ENCODE measurements at regions of chr2 and their contacts with region 1.

Region 1: DNA sequence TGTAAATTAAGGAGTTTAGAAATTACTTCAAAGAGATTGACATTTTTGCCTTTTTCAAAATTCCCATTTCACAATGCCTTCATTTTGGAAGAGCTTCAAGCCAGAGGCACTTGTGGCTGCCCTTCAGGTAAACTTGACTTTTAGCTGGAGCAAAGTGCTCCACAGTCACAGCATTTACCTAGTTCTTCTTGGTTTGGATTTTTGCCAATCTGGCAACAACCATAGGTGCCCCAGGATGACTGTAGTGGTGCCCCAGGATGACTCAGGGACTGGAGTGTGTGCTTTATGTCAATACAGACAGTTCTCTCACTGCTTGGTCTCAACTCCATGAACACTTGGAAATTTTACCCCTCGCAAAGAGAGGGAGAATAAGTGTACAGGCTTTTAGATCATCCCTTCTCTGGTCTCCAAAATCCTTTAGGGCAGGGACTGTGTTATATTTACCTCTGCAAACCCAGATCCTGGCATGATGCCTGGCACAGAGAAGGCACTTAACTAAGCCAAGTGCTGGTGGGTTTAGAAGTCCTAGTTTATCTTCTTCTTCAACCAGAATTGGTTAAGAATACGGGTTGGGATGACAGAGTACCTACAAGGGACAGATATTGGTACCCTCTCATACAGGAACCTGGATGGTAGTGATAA is 15.3 kb upstream of the PTPN4 start:
- DNase-seq: peak; percentile 76
- H3K4me3 Mint-ChIP-seq: no peak overlapping the region
- H3K27ac Mint-ChIP-seq: no peak overlapping the region
- H3K4me1 Mint-ChIP-seq: peaks cover 27% of the 10 kb centered on the region
- H3K27me3 Mint-ChIP-seq: peaks cover 62% of the 10 kb centered on the region
- CTCF ChIP-seq: no peak

Region 2: DNA sequence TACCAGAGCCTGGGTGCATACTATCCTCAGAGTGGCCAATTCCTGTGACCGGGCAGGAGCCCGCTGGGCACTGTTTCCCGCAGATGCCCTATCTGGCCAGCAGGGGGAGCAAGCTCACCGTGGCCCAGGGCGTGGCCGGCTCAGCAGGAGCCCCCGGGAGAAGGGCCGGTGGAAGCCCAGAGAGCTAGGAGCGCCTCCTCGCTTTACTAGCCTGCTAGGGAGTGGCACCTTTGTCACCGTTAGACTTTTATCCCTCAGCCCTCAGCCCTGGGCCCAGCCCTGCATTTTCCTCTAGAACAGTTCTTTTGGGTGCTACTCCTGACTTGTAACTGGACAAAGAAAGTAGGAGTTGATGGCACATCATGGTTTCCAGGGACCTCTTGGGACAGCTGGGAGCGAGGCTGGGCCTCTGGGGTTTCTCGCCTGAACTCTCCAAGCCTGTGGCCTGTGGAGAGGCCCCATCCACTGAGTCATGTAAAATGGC is 41.5 kb before region 1 on chr2:
- CTCF ChIA-PET with region 1: no interaction called
- intact Hi-C with region 1: loop called (anchors 5 kb)
- DNase-seq: peak; percentile 83
- H3K4me3 Mint-ChIP-seq: no peak overlapping the region
- H3K27ac Mint-ChIP-seq: no peak overlapping the region
- H3K4me1 Mint-ChIP-seq: no peaks in the 10 kb centered on the region
- H3K27me3 Mint-ChIP-seq: no peaks in the 10 kb centered on the region
- CTCF ChIP-seq: peak; percentile 96